ENCODE measurements at regions of chr18 and their contacts with region 1.

Region 1: GRCh38 chr18:36302676-36303075 is 5.2 kb downstream of the FHOD3 start:
- DNase-seq: no peak
- ATAC-seq: peak in 1 of 2 donors; percentile 18
- H3K4me3 ChIP-seq: no peak overlapping the region
- H3K27ac ChIP-seq: peak overlapping the region in 3 of 4 donors; percentile 33 to 79 (median 51)
- H3K4me1 ChIP-seq: peaks cover 53 to 68% of the 10 kb centered on the region in 2 donors
- H3K27me3 ChIP-seq: no peaks in the 10 kb centered on the region
- CTCF ChIP-seq: no peak
- POLR2A ChIP-seq: no peak

Region 2: DNA sequence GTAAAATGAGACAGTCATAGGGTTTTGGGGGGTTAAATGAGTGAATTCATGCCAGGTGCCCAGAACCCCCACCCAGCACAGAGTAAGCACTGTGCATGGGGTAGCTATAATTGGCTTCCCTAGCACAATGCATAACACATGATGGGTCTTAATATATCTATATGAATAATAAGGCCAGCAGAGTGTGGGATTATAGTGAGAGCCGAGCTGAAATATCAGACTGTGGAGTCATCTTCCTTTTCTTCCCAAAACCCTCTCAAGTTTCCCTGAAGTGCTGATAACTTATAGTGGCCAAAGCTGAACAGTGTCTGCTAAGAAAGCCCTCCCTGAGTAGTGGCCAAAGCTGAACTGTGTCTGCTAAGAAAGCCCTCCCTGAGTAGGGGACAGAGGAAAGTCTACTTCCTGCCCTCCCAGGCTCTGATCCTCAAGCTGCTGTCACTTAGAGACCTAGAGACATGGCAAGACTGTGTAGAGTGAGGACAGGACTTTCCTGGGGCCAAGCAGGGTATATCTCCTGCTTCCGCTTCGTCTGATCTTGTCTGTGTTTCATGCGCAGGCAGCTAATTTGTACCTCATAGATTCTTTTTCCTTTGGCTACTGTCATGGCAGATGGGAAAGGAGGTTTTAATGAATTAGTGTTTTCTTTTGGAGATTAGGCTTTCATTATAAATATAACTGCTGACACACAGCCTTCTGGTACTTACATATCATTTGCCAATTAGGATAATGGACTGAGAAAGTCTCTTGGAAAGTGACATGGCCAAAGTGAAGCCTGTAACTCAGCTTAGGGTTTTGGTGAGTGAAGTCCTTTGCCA is 89.7 kb after region 1 on chr18:
- in situ Hi-C with region 1: no loop called
- intact Hi-C with region 1: loop called (anchors 5 kb)
- DNase-seq: peak in 1 of 2 donors; percentile 24
- ATAC-seq: peak; percentile 64 to 77
- H3K4me3 ChIP-seq: peak overlapping the region in 2 of 4 donors; percentile 12 to 22
- H3K27ac ChIP-seq: peak overlapping the region; percentile 80 to 96 (median 92)
- H3K4me1 ChIP-seq: peaks cover 46 to 65% of the 10 kb centered on the region in 2 donors
- H3K27me3 ChIP-seq: no peaks in the 10 kb centered on the region
- CTCF ChIP-seq: no peak
- POLR2A ChIP-seq: peak in 1 of 2 donors; percentile 9